PC-9 (cell line): ENCODE measurements at regions of chr5 and their contacts with region 1.

Region 1: GRCh38 chr5:116032094-116032517 is at the start of gene ARL14EPL:
- DNase-seq: peak; percentile 58 to 74
- H3K4me3 ChIP-seq: peak within 1 kb of the TSS; percentile 42; the same call in 1 of the 2 replicates
- H3K27ac ChIP-seq: peak within 1 kb of the TSS; percentile 81
- H3K4me1 ChIP-seq: peaks cover 19% of the 10 kb centered on the region
- H3K27me3 ChIP-seq: no peaks in the 10 kb centered on the region
- CTCF ChIP-seq: peak; percentile 39; the same call in 1 of the 2 replicates
- total RNA-seq, gene ARL14EPL: 0.37 TPM in 1 of 2 replicates, not detected in the other

Region 2: DNA sequence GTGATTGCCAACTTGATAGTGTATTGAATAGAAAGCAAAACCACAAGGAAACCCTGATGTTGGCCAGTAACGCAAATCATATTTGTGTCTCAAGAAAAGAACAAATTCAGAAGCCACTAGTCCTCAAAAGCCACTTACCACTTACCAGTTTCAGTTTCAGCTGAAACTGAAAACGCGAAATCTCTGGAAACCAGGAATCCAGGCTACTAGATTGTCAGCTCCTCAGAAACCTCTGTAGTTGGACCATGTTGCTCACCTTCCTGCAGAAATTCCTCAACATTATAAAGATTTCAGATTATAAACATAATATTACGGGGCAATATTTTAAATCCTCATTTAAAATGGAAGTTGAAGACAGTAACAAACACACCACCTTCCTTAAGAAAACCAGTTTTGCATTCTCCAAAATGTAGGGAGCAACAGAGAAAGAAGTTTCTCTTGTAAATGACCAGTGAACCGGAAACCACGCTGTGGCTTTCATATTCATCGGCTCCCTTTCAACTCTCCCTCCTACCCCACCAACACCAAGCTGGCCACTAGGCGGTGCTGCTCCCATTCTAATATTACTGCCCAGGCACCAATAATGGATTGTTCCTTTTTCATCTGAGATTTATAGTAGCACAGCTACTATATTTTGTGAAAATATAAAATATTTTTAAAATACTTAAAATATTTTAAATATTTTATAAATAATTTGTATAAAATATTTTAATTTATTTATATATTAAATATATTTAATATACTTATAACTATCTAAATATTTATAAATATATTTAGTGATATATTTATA is 397.6 kb before region 1 on chr5:
- CTCF ChIA-PET with region 1: interaction called, 3 read pairs
- POLR2A ChIA-PET with region 1: no interaction called
- intact Hi-C with region 1: loop called (anchors 5 kb)
- DNase-seq: peak; percentile 53 to 82
- H3K4me3 ChIP-seq: peak overlapping the region; percentile 37; the same call in 1 of the 2 replicates
- H3K27ac ChIP-seq: peak overlapping the region; percentile 11; the same call in 1 of the 2 replicates
- H3K4me1 ChIP-seq: peaks cover 7% of the 10 kb centered on the region
- H3K27me3 ChIP-seq: no peaks in the 10 kb centered on the region
- CTCF ChIP-seq: peak; percentile 86

Region 3: DNA sequence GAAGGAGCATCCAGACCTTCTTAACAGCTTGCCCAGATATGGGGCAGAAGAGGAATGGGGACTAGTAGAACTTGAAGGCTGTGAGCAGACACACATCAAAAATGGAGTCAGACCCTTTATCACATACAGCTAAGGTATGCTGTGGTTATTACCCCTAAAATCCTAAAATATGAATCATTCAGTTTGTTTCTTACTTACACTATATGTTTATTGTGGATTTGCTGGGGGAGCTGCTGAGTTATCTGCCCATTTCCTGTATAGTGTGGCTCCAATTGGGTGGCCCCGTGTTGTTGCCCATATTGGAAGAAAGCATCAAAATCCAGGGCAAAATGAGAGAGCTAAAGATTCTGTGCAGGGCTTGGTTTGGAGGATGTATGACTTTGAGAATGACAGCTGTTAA is 133.4 kb before region 1 on chr5:
- CTCF ChIA-PET with region 1: no interaction called
- POLR2A ChIA-PET with region 1: no interaction called
- intact Hi-C with region 1: loop called (anchors 10 kb)
- DNase-seq: no peak
- H3K4me3 ChIP-seq: no peak overlapping the region
- H3K27ac ChIP-seq: no peak overlapping the region
- H3K4me1 ChIP-seq: no peaks in the 10 kb centered on the region
- H3K27me3 ChIP-seq: no peaks in the 10 kb centered on the region
- CTCF ChIP-seq: no peak